ENCODE measurements at regions of chr3 and their contacts with region 1.

Region 1: DNA sequence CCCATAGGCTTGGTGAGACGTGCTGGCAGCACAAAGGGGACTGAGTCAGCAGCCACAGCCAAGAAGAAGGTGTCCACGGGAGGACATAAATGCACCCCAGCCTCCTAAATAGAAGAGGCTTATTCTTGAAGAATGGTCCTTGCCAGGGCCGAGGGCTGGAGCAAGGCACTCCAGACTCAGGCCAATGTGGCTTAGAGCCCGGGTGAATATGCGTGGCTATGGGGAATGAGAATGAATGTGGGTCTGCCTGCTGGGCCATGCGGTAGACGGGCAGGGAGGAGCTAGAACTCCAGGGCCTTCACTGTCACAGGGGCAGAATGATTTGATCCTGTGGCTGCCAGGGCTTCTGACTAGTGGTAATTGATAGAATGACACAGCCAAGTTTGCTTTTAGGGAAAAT is 34.0 kb downstream of the DHX30 start:
- DNase-seq: no peak
- ATAC-seq: no peak
- H3K4me3 Mint-ChIP-seq: no peak overlapping the region
- H3K27ac Mint-ChIP-seq: no peak overlapping the region
- H3K4me1 Mint-ChIP-seq: no peaks in the 10 kb centered on the region
- H3K27me3 Mint-ChIP-seq: no peaks in the 10 kb centered on the region

Region 2: GRCh38 chr3:48157950-48158376 is 321.0 kb after region 1 on chr3:
- CTCF ChIA-PET with region 1: interaction called, 26 read pairs
- POLR2A ChIA-PET with region 1: no interaction called
- DNase-seq: peak; percentile 61
- ATAC-seq: peak; percentile 27
- H3K4me3 Mint-ChIP-seq: no peak overlapping the region
- H3K27ac Mint-ChIP-seq: no peak overlapping the region
- H3K4me1 Mint-ChIP-seq: no peaks in the 10 kb centered on the region
- H3K27me3 Mint-ChIP-seq: no peaks in the 10 kb centered on the region

Measured in activated CD8-positive, alpha-beta T cell treated with anti-CD3 and anti-CD28 coated beads, Interleukin-2, amount 10 ng/mL, durations not matched to agents 7 days and 5 days (primary cell).